Endothelial cell of umbilical vein (primary cell): ENCODE measurements at regions of chr16 and their contacts with region 1.

Region 1: GRCh38 chr16:27235055-27235937 is 32.0 kb downstream of the KDM8 start:
- DNase-seq: peak; percentile 96
- H3K4me3 ChIP-seq: no peak overlapping the region
- H3K27ac ChIP-seq: peak overlapping the region; percentile 99
- H3K4me1 ChIP-seq: peaks cover 56% of the 10 kb centered on the region
- H3K27me3 ChIP-seq: no peaks in the 10 kb centered on the region
- CTCF ChIP-seq: peak; percentile 86 to 94
- POLR2A ChIP-seq: no peak

Region 2: DNA sequence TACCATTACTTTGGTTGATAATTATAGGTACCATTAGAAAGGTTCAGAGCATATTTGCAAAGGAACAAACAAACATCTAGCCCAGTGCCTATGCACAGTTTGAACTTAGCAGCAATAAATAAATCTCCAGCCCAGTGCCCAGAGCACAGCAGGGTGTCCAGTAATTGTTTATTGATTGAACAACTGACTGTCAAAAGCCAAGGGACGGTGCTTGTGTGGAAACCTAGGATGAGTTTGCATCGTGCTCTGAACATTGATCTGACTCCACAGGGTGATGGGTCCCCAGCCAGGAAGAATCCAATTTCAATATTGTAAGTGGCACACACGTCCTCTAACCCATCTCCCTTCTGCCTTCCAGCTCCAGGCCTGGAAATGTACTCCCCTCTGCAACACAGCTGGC is 794.1 kb before region 1 on chr16:
- CTCF ChIA-PET with region 1: no interaction called
- POLR2A ChIA-PET with region 1: no interaction called
- dilution Hi-C with region 1: no loop called
- intact Hi-C with region 1: no loop called
- DNase-seq: no peak
- H3K4me3 ChIP-seq: no peak overlapping the region
- H3K27ac ChIP-seq: no peak overlapping the region
- H3K4me1 ChIP-seq: no peaks in the 10 kb centered on the region
- H3K27me3 ChIP-seq: no peaks in the 10 kb centered on the region
- CTCF ChIP-seq: no peak
- POLR2A ChIP-seq: no peak

Region 3: DNA sequence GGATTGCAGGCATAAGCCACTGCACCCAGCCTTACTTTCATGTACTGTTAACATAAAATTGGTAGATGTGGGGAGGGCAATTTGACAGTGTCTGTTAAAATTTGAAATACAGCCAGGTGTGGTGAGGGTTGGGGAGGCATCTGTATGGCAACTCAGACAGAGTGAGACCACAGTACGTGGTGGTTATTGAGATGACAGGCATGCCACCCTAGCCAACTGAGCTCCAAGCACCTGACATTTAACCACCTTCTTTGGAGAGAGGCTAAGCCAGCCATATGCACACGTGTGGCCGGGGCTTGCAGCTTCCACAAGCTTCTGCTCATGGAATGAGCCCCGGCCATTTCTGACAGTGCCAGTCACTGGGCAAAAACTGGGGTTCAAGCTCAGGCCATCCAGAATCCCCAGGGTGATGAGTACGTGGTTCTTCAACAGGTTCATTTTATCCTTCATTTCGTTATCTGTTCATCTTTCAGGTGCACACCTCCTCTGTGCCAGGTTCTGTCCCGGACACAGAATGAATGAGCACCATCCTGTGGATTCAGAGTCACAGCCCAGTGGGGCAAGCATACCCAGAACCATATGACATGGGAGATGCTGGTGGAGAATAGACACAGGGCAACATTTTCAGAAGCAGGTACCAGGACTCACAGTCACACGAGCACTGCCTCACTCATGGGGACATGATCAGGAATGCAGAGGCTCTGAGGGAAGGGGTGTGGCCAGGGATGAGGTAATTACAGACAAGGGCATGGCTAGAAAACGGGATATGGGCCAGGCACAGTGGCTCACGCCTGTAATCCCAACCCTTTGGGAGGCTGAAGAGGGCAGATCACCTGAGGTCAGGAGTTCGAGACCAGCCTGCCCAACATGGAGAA is 132.4 kb before region 1 on chr16:
- CTCF ChIA-PET with region 1: no interaction called
- POLR2A ChIA-PET with region 1: no interaction called
- dilution Hi-C with region 1: no loop called
- intact Hi-C with region 1: no loop called
- DNase-seq: no peak
- H3K4me3 ChIP-seq: no peak overlapping the region
- H3K27ac ChIP-seq: no peak overlapping the region
- H3K4me1 ChIP-seq: no peaks in the 10 kb centered on the region
- H3K27me3 ChIP-seq: no peaks in the 10 kb centered on the region
- CTCF ChIP-seq: no peak
- POLR2A ChIP-seq: no peak

Region 4: DNA sequence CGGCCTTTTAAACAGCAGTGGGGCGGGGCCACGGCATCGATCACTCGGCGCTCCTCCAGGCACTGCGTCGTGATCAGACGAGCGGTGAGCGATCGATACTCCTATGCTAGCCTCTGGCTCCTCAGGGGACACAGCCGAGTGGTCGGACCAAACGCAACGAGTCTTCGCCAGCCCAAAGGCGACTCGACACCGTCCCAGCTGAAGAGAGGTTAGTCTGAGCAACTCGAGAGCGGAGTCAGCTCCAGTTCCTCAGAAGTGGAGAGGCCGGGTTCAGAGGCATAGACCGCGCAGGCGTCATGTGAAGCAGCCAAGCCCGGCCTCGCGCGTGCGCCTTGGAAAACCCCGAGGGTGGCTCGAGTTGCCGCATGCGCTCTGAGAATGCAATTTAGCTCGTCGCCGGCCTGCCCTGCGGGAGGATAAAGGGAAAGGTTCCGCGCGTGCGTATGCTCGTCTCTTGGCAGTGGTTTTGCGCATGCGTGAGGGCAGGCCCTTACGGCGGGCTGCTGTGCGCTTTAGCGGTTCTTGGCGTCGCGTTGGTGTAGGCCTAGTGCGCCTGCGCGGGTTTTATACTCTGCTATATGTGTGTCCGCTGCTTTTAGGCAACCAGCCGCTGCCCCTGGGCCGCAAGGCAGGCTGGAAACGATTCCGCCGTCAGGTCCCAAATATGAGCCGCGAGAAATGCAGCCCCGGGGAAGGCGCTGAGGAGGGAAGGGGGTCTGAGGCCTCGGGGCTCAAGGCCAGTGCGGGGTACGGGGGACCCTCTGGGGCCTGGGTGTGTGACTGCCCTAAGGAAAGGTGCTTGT is 31.7 kb before region 1 on chr16 and contains the start of gene KDM8:
- CTCF ChIA-PET with region 1: interaction called, 16 read pairs
- POLR2A ChIA-PET with region 1: interaction called, 6 read pairs
- dilution Hi-C with region 1: no loop called
- intact Hi-C with region 1: loop called (anchors 1 kb)
- DNase-seq: peak; percentile 100
- H3K4me3 ChIP-seq: peak within 1 kb of the TSS; percentile 19 to 78 (median 59)
- H3K27ac ChIP-seq: peak within 1 kb of the TSS; percentile 78
- H3K4me1 ChIP-seq: peaks cover 10% of the 10 kb centered on the region
- H3K27me3 ChIP-seq: peaks cover 2 to 6% of the 10 kb centered on the region in 2 experiments
- CTCF ChIP-seq: no peak
- POLR2A ChIP-seq: peak; percentile 90
- total RNA-seq, gene KDM8: 8.4 and 8.9 TPM in 2 replicates

Region 5: GRCh38 chr16:27268376-27269299 is 33.3 kb after region 1 on chr16 and contains the start of gene NSMCE1:
- CTCF ChIA-PET with region 1: interaction called, 5 read pairs
- POLR2A ChIA-PET with region 1: no interaction called
- dilution Hi-C with region 1: no loop called
- intact Hi-C with region 1: loop called (anchors 1 kb)
- DNase-seq: peak; percentile 92
- H3K4me3 ChIP-seq: peak within 1 kb of the TSS; percentile 61 to 78 (median 77)
- H3K27ac ChIP-seq: peak within 1 kb of the TSS; percentile 58
- H3K4me1 ChIP-seq: peaks cover 16% of the 10 kb centered on the region
- H3K27me3 ChIP-seq: no peaks in the 10 kb centered on the region
- CTCF ChIP-seq: peak in 1 of 2 donors; percentile 23
- POLR2A ChIP-seq: peak; percentile 86
- total RNA-seq, gene NSMCE1: 42.0 and 46.4 TPM in 2 replicates

Region 6: GRCh38 chr16:27321011-27321915 is 86.0 kb after region 1 on chr16:
- CTCF ChIA-PET with region 1: interaction called, 42 read pairs
- POLR2A ChIA-PET with region 1: interaction called, 4 read pairs
- dilution Hi-C with region 1: no loop called
- intact Hi-C with region 1: no loop called
- DNase-seq: no peak
- H3K4me3 ChIP-seq: no peak overlapping the region
- H3K27ac ChIP-seq: no peak overlapping the region
- H3K4me1 ChIP-seq: peaks cover 29% of the 10 kb centered on the region
- H3K27me3 ChIP-seq: no peaks in the 10 kb centered on the region
- CTCF ChIP-seq: no peak
- POLR2A ChIP-seq: no peak

Region 7: GRCh38 chr16:27340654-27341053 is 105.4 kb after region 1 on chr16:
- CTCF ChIA-PET with region 1: interaction called, 17 read pairs
- POLR2A ChIA-PET with region 1: no interaction called
- dilution Hi-C with region 1: no loop called
- intact Hi-C with region 1: no loop called
- DNase-seq: no peak
- H3K4me3 ChIP-seq: no peak overlapping the region
- H3K27ac ChIP-seq: no peak overlapping the region
- H3K4me1 ChIP-seq: peaks cover 4% of the 10 kb centered on the region
- H3K27me3 ChIP-seq: no peaks in the 10 kb centered on the region
- CTCF ChIP-seq: no peak
- POLR2A ChIP-seq: no peak

Region 8: DNA sequence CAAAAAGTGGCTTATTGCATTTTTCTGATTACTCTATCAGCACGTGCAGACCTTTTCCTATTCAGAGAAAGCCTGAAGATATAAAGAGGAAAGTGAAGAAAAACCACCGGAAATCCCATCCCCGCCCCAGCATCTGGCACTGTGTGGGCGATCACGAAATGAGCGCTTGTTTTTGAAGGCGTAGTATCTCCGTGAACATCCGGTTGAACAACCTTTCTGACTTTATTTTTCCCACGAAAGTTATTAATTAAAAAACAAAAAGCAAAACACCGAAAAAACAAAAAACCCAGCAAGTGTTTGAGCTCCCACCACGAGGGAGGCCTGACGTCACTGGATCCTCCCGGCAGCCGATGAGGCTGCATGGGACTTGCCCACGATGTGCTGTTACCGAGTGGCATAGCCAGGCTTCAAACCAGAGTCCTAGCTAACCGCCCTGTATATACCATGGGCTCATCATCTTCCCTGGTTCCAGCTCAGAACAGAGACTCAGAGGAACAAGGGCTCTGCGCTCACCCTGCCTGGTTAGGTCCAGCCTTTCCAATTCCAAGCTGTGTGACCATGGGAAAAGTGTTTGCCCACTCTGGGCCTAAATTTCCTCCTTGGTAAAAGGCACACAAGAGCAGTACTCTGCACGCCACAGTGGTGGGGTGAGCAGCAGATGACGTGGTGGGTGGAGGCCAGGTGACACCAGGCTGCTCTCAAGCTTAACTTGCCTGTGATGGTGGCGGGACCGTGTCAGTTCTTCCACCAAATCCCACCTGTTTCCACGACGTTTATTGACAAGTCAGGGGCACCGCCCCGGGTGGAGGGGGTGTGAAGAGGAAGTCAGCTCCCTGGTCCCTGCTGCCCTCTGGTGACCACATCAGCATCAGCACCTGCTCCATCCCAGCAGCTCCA is 132.4 kb after region 1 on chr16:
- CTCF ChIA-PET with region 1: interaction called, 299 read pairs
- POLR2A ChIA-PET with region 1: interaction called, 6 read pairs
- dilution Hi-C with region 1: no loop called
- intact Hi-C with region 1: loop called (anchors 1 kb)
- DNase-seq: peak; percentile 82
- H3K4me3 ChIP-seq: peak overlapping the region in 1 of 3 experiments; percentile 3
- H3K27ac ChIP-seq: peak overlapping the region; percentile 87
- H3K4me1 ChIP-seq: peaks cover 19% of the 10 kb centered on the region
- H3K27me3 ChIP-seq: no peaks in the 10 kb centered on the region
- CTCF ChIP-seq: peak; percentile 64 to 93
- POLR2A ChIP-seq: peak; percentile 49